PC-3 (cell line): ENCODE measurements at regions of chr9 and their contacts with region 1.

Region 1: DNA sequence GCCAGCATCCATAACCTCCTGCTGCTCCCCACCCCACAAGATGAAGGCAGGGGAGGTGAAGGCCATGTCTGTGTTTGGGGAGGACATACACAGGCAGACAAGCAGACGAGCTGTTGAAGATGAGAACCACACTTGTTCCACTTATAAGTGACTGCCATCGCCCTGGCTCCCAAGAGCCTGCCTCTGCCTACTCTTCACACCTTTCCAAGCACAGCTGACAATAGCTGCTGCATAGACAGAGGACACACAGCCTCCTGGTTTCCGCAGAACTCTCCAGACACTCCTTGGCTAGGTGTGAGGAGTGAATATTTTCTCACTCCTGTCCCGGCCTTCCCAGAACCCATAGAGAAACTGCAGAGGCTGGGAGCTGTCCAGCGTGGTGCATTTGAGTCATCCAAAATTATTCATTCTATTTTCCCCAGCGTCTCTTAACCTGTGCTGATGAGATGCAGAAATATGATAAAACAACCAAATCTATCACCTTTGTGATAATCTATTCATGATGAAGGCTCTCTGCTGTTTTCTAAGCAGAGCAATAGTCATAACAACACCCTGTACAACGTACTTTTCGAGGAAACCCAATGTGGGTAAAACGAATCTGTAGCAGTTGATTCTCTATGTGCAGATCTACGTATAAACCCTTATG is 24.7 kb downstream of the KLF9 start:
- DNase-seq: peak; percentile 12
- ATAC-seq: peak; percentile 37; the same call in 1 of the 2 replicates
- H3K4me3 ChIP-seq: no peak overlapping the region
- H3K27ac ChIP-seq: no peak overlapping the region
- H3K4me1 ChIP-seq: no peaks in the 10 kb centered on the region
- H3K27me3 ChIP-seq: 0 out of 2 replicates have a peak, but pooled peaks cover 2% of the 10 kb centered on the region
- CTCF ChIP-seq: no peak

Region 2: DNA sequence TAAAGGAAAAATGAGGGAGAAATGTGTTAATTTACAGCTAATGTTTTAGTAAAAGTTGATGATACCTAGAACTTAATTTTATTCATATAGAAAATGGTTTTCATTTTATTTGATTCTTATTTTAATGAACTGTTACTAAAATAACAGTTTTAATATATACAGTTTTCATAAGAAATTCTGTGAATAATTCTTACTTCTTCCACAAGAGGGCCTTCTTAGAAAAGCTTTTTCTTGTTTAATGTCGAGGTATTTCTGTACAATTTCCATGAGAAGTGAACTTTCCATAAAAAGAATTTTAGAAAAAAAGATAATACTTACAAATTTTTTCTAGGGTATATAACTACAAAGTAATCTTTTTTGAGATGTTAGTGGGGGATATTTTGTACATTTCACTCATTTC is 49.2 kb before region 1 on chr9:
- CTCF ChIA-PET with region 1: no interaction called
- POLR2A ChIA-PET with region 1: no interaction called
- intact Hi-C with region 1: loop called (anchors 2 kb)
- DNase-seq: peak; percentile 40
- ATAC-seq: no peak
- H3K4me3 ChIP-seq: no peak overlapping the region
- H3K27ac ChIP-seq: no peak overlapping the region
- H3K4me1 ChIP-seq: no peaks in the 10 kb centered on the region
- H3K27me3 ChIP-seq: no peaks in the 10 kb centered on the region
- CTCF ChIP-seq: peak; percentile 52